Activated naive CD4-positive, alpha-beta T cell treated with anti-CD3 and anti-CD28 coated beads, Interleukin-2, amount 10 ng/mL, durations not matched to agents 7 days and 5 days (primary cell): ENCODE measurements at regions of chr13 and their contacts with region 1.

Region 1: GRCh38 chr13:20197361-20197834 is 4.7 kb upstream of the GJB2 start:
- DNase-seq: peak; percentile 32
- H3K4me3 Mint-ChIP-seq: no peak overlapping the region
- H3K27ac Mint-ChIP-seq: no peak overlapping the region
- H3K4me1 Mint-ChIP-seq: peaks cover 24% of the 10 kb centered on the region
- H3K27me3 Mint-ChIP-seq: peaks cover 68% of the 10 kb centered on the region

Region 2: GRCh38 chr13:20475927-20476691 is 278.7 kb after region 1 on chr13:
- CTCF ChIA-PET with region 1: interaction called, 15 read pairs
- DNase-seq: peak; percentile 84
- H3K4me3 Mint-ChIP-seq: peak overlapping the region; percentile 72
- H3K27ac Mint-ChIP-seq: peak overlapping the region; percentile 100
- H3K4me1 Mint-ChIP-seq: peaks cover 50% of the 10 kb centered on the region
- H3K27me3 Mint-ChIP-seq: peaks cover 11% of the 10 kb centered on the region

Region 3: GRCh38 chr13:20489185-20489820 is 291.9 kb after region 1 on chr13:
- CTCF ChIA-PET with region 1: interaction called, 22 read pairs
- DNase-seq: no peak
- H3K4me3 Mint-ChIP-seq: no peak overlapping the region
- H3K27ac Mint-ChIP-seq: no peak overlapping the region
- H3K4me1 Mint-ChIP-seq: peaks cover 18% of the 10 kb centered on the region
- H3K27me3 Mint-ChIP-seq: no peaks in the 10 kb centered on the region

Region 4: DNA sequence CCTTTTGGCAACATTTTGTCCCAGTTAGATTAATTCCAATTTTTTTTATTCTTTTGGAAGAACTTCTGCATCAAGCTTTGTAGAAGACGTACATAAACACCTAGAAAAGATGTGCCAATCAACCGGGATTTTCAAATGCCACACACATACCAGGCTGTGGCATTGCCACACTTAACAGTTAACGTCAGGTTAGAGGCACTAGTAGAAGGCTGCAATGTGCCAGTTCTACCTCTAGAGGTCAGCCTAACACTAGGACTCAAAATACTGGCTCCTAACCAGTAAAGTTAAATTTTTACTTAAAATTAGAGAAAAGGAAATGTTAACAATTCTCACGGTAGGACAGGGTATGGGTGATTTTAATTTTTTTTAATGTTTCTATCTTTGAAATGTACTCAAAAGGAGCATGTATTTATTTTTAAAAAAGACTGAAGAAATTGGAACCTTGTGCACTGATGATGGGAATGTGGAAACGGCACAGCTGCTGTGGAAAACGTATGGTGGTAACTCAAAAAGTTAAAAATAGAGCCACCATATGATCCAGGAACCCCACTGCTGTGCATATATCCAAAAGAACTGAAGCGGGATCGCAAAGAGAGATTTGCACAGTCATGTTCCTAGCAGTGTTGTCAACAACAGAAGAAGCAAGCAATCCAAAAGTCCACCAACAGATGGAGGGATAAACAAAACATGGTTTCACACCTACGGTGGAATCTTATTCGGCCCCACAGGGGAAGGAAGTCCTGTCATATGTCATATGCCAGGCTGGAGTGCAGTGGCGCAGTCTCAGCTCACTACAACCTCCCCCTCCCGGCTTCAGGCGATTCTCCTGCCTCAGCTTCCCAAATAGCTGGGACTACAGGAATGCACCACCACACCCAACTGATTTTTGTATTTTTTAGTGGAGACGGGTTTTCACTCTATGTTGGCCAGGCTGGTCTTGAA is 298.0 kb after region 1 on chr13:
- CTCF ChIA-PET with region 1: interaction called, 22 read pairs
- DNase-seq: peak; percentile 76
- H3K4me3 Mint-ChIP-seq: no peak overlapping the region
- H3K27ac Mint-ChIP-seq: no peak overlapping the region
- H3K4me1 Mint-ChIP-seq: peaks cover 17% of the 10 kb centered on the region
- H3K27me3 Mint-ChIP-seq: no peaks in the 10 kb centered on the region